GM12878 (cell line): ENCODE measurements at regions of chr11 and their contacts with region 1.

Region 1: GRCh38 chr11:13289081-13289480 is 11.5 kb downstream of the BMAL1 start:
- DNase-seq: no peak
- ATAC-seq: no peak
- H3K4me3 ChIP-seq: no peak overlapping the region
- H3K27ac ChIP-seq: no peak overlapping the region
- H3K4me1 ChIP-seq: peaks cover 3% of the 10 kb centered on the region; the same call in 1 of the 2 replicates
- H3K27me3 ChIP-seq: no peaks in the 10 kb centered on the region
- CTCF ChIP-seq: no peak; a peak in 1 of 6 replicates
- EP300 ChIP-seq: no peak
- POLR2A ChIP-seq: no peak
- RAD21 ChIP-seq: no peak

Region 2: DNA sequence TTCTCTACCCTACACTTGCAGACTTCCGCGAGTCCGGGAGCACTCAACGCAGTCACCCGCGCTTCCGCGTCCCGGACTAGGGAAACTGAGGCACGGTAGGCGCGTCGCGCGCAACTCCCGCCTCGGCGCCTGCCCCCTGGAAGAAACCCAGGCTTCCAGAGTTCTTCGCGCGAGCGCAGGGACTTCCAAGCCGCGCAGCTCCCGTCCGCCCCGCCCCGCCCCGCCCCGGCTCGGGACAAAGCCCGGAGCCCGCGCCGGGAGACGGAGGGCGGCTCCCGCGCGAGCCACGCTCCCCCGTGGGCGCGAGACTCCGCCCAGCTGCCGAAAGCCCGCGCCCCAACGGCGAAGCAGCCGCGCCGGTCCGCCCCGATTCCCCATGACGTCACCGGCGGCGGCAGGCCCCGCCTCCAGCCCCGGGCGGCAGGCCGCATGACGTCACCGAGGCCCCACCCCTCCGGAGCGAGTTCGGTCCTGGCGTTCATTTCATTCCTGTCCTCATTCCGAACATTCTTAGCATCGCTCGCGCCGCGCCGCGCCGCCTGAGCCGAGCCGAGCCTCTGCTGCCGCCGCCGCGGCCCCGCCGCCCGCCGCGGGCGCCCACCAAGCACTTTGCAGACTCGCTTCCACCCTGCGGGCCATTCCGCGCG is 615.0 kb before region 1 on chr11 and contains the start of gene TEAD1:
- CTCF ChIA-PET with region 1: no interaction called
- POLR2A ChIA-PET with region 1: no interaction called
- RAD21 ChIA-PET with region 1: no interaction called
- SMC1A ChIA-PET with region 1: no interaction called
- in situ Hi-C with region 1: no loop called
- intact Hi-C with region 1: no loop called
- DNase-seq: no peak
- ATAC-seq: peak; percentile 89
- H3K4me3 ChIP-seq: peak within 1 kb of the TSS; percentile 51; the same call in 1 of the 2 replicates
- H3K27ac ChIP-seq: no peak within 1 kb of the TSS
- H3K4me1 ChIP-seq: no peaks in the 10 kb centered on the region
- H3K27me3 ChIP-seq: peaks cover 6 to 7% of the 10 kb centered on the region in 2 experiments
- CTCF ChIP-seq: no peak
- EP300 ChIP-seq: no peak
- POLR2A ChIP-seq: no peak
- RAD21 ChIP-seq: no peak
- polyA plus RNA-seq, gene TEAD1: not detected

Region 3: GRCh38 chr11:13256216-13256615 is 32.9 kb before region 1 on chr11:
- CTCF ChIA-PET with region 1: interaction called, 5 read pairs
- POLR2A ChIA-PET with region 1: no interaction called
- RAD21 ChIA-PET with region 1: interaction called, 6 read pairs
- SMC1A ChIA-PET with region 1: interaction called, 11 read pairs
- in situ Hi-C with region 1: no loop called
- intact Hi-C with region 1: no loop called
- DNase-seq: no peak
- ATAC-seq: no peak
- H3K4me3 ChIP-seq: no peak overlapping the region
- H3K27ac ChIP-seq: no peak overlapping the region
- H3K4me1 ChIP-seq: no peaks in the 10 kb centered on the region
- H3K27me3 ChIP-seq: no peaks in the 10 kb centered on the region
- CTCF ChIP-seq: no peak
- EP300 ChIP-seq: no peak
- POLR2A ChIP-seq: no peak
- RAD21 ChIP-seq: no peak

Region 4: DNA sequence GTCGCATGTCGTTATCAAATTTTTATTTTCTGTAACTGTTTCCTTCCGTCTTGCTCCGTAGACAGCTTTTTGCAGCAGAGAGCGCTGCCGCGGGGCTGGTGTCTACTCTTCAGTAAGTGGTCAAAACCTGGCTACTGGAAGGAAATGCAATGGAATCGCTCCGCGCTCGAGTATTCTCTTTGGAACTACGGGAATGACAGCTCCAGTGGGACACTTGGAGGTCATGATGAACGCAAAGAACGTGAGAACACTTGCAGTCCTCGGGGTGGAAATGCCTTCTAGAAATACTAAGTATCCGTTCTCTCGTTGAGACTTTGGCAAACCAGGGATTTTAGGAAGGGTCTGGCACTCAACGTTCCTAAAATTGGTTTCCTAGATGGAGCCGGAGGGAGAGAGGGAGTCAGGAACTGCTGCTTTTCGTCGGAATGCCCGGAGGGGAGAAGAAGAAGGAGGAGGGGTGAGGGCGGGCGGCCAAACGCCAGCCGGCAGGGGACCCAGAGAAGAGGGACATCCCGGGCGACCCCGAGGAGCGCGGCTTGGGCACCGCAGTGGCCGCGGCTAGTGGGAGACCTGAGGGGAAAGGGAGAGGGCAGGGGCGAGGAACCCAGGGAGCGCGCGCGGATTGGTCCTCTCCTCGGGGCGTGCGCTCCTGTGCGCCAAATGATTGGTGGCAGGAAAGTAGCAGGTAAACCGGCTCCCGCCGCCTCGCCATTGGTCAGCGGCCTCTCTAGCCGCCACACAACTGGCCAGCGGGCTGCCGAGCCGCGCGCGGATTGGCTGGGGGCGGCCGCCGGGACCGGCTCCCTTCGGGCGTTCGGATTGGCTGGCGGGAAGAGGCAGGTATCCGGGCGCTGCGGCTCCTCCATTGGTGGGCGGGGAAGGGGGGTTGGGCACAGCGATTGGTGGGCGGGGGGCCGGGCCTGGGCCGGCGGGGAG is 12.0 kb before region 1 on chr11:
- CTCF ChIA-PET with region 1: interaction called, 13 read pairs
- POLR2A ChIA-PET with region 1: interaction called, 17 read pairs
- RAD21 ChIA-PET with region 1: interaction called, 20 read pairs
- SMC1A ChIA-PET with region 1: interaction called, 25 read pairs
- in situ Hi-C with region 1: no loop called
- intact Hi-C with region 1: no loop called
- DNase-seq: peak; percentile 85
- ATAC-seq: peak; percentile 89
- H3K4me3 ChIP-seq: peak overlapping the region; percentile 74
- H3K27ac ChIP-seq: no peak overlapping the region
- H3K4me1 ChIP-seq: peaks cover 2% of the 10 kb centered on the region; the same call in 1 of the 2 replicates
- H3K27me3 ChIP-seq: peaks cover 0 to 6% of the 10 kb centered on the region in 2 experiments; a peak in 1 of 4 replicates
- CTCF ChIP-seq: no peak
- EP300 ChIP-seq: no peak
- POLR2A ChIP-seq: peak; percentile 58; the same call in 1 of the 2 replicates
- RAD21 ChIP-seq: no peak

Region 5: DNA sequence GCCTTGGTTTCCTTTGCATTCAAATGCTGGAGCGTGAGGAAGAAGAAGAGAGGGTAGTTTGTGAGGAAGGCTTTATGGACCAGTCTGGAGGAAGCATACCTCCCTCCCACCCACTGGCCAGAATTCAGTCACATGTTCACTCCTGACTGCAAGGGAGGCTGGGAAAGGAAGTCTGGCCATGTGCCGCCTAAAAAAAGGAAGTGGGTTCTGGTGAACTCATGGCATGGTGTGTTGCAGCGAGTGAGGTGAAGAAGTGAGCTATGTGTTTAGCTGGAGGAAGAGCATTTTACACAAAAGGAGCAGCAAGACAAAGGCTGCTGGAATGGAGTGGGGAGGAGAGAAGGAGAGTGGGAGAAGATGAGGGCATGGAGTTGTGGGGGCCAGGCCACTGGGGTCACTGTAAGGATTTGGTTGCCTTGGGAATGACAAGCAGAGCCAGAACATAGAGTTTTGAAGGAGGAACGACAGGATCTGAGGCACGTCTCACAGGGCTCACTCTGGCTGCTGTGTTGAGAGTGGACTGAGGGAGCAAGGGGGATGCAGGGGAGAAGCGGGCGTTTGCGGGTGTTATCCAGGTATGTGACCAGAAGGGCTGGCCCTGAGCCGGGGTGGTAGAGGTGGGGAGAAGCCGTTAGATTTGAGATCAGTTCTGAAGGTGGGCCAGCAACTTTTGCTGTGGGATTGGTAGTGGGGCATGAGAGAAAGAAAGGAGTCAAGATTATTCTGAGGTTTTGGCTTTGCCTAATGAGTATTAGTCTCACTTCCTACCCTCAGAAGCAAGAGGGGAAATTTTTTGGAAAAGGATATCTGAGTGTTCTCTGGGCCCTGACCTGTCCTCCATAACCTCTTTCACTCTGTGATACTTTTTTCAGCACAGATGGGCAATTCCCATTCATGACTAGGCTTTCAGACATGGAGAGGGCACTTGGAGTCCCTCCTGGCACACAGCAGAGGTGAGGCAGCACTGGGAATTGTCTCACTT is 14.9 kb after region 1 on chr11:
- CTCF ChIA-PET with region 1: interaction called, 5 read pairs
- POLR2A ChIA-PET with region 1: interaction called, 3 read pairs
- RAD21 ChIA-PET with region 1: interaction called, 3 read pairs
- SMC1A ChIA-PET with region 1: interaction called, 11 read pairs
- in situ Hi-C with region 1: no loop called
- intact Hi-C with region 1: no loop called
- DNase-seq: no peak
- ATAC-seq: peak; percentile 78
- H3K4me3 ChIP-seq: no peak overlapping the region
- H3K27ac ChIP-seq: no peak overlapping the region; the same call in 1 of the 2 replicates
- H3K4me1 ChIP-seq: peaks cover 16% of the 10 kb centered on the region
- H3K27me3 ChIP-seq: no peaks in the 10 kb centered on the region
- CTCF ChIP-seq: no peak
- EP300 ChIP-seq: no peak
- POLR2A ChIP-seq: no peak
- RAD21 ChIP-seq: no peak

Region 6: GRCh38 chr11:13316528-13316961 is 27.5 kb after region 1 on chr11:
- CTCF ChIA-PET with region 1: interaction called, 5 read pairs
- POLR2A ChIA-PET with region 1: interaction called, 23 read pairs
- RAD21 ChIA-PET with region 1: interaction called, 42 read pairs
- SMC1A ChIA-PET with region 1: interaction called, 85 read pairs
- in situ Hi-C with region 1: no loop called
- intact Hi-C with region 1: no loop called
- DNase-seq: no peak
- ATAC-seq: peak; percentile 84
- H3K4me3 ChIP-seq: no peak overlapping the region
- H3K27ac ChIP-seq: no peak overlapping the region
- H3K4me1 ChIP-seq: peaks cover 21% of the 10 kb centered on the region
- H3K27me3 ChIP-seq: no peaks in the 10 kb centered on the region
- CTCF ChIP-seq: no peak
- EP300 ChIP-seq: 0 out of 4 replicates have a peak, but pooled peaks of 1 of the 2 experiments have one; percentile 22
- POLR2A ChIP-seq: no peak
- RAD21 ChIP-seq: no peak

Region 7: GRCh38 chr11:13343931-13344717 is 55.0 kb after region 1 on chr11:
- CTCF ChIA-PET with region 1: interaction called, 15 read pairs
- POLR2A ChIA-PET with region 1: no interaction called
- RAD21 ChIA-PET with region 1: interaction called, 65 read pairs
- SMC1A ChIA-PET with region 1: interaction called, 47 read pairs
- in situ Hi-C with region 1: no loop called
- intact Hi-C with region 1: no loop called
- DNase-seq: no peak
- ATAC-seq: peak; percentile 69
- H3K4me3 ChIP-seq: no peak overlapping the region
- H3K27ac ChIP-seq: no peak overlapping the region
- H3K4me1 ChIP-seq: peaks cover 40% of the 10 kb centered on the region
- H3K27me3 ChIP-seq: no peaks in the 10 kb centered on the region
- CTCF ChIP-seq: peak; percentile 79 to 84 (median 80)
- EP300 ChIP-seq: no peak
- POLR2A ChIP-seq: no peak
- RAD21 ChIP-seq: peak; percentile 84